CD8-positive, alpha-beta T cell (primary cell): ENCODE measurements at regions of chr11 and their contacts with region 1.

Region 1: DNA sequence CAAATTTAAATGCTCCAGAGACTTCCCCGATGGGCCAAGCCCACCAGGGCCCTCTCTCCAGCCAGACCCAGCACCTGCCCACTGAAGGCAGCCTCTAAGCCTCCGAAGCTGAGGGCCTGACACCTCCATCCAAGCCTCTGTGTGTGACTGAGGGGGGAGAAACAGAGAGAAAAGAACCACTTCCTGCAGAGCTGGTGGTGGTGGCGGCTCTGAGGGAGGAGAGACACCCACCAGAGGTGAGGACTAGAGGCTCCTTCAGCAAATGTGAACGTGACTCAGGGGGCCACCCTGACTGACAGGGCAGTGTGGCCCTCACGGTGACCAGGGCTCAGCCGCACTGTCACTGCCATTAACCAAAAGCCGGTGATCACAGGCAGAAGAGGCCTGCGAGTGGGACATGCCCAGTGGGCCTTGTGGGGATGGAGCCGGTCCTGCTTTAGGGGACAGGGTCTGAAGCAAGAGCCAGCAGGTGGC is 31.0 kb upstream of the CD5 start:
- DNase-seq: peak; percentile 37 to 87 (median 73)
- ATAC-seq: peak; percentile 98
- H3K4me3 ChIP-seq: no peak overlapping the region
- H3K4me3 Mint-ChIP-seq: peak overlapping the region; percentile 64
- H3K27ac ChIP-seq: peak overlapping the region; percentile 13 to 74
- H3K27ac Mint-ChIP-seq: peak overlapping the region; percentile 94
- H3K4me1 ChIP-seq: peaks cover 76% of the 10 kb centered on the region
- H3K4me1 Mint-ChIP-seq: peaks cover 81% of the 10 kb centered on the region
- H3K27me3 ChIP-seq: no peaks in the 10 kb centered on the region
- H3K27me3 Mint-ChIP-seq: no peaks in the 10 kb centered on the region
- CTCF ChIP-seq: no peak

Region 2: DNA sequence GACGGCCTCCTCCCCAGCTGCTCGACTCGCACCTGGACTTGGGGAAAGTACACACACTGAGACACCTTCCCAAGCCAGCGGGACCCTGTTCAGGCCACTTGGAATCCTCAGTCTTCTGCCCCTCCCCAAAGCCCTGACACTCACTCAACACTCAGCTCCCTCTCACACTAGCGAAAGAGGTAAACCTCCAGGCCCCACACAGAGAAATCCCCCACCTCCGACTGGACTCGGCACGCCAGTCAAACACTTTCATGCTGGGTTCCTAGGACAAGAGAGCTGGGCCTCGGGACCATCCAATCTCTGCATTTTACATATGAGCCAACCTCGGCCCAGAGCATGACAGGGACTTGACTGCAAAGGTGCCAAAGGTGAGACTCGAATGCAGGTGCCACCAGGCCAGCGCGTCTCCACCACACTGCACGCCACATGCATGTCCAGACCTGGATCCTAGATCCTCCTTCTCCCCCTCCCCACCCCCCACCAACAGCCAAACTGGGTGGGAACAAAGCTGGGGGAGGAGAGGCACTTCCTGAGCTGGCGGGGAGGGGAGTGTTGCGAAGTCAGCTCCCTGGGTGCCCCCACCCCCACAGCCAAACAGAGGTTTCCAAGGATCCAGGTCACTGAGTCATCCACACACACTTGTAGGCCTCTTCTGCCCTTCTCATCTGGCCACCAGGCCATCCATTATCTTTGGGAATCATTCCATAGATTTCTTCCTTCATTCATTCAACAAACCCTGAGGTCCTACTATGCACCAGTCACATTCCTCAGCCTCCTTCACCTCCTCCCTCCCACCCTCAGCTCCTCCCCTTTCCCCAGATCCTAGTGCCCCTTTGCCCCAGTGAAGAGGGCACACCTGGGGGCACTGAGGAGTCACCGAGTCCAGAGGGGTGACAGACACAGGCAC is 20.4 kb after region 1 on chr11:
- CTCF ChIA-PET with region 1: interaction called, 4 read pairs
- POLR2A ChIA-PET with region 1: interaction called, 3 read pairs
- intact Hi-C with region 1: loop called in 1 of 2 experiments (anchors 2 kb)
- DNase-seq: peak in 1 of 9 experiments; percentile 38
- ATAC-seq: peak; percentile 21
- H3K4me3 ChIP-seq: peak overlapping the region in 1 of 2 experiments; percentile 33
- H3K4me3 Mint-ChIP-seq: peak overlapping the region; percentile 55
- H3K27ac ChIP-seq: no peak overlapping the region
- H3K27ac Mint-ChIP-seq: peak overlapping the region; percentile 71
- H3K4me1 ChIP-seq: peaks cover 28% of the 10 kb centered on the region
- H3K4me1 Mint-ChIP-seq: peaks cover 37% of the 10 kb centered on the region
- H3K27me3 ChIP-seq: no peaks in the 10 kb centered on the region
- H3K27me3 Mint-ChIP-seq: no peaks in the 10 kb centered on the region
- CTCF ChIP-seq: no peak

Region 3: DNA sequence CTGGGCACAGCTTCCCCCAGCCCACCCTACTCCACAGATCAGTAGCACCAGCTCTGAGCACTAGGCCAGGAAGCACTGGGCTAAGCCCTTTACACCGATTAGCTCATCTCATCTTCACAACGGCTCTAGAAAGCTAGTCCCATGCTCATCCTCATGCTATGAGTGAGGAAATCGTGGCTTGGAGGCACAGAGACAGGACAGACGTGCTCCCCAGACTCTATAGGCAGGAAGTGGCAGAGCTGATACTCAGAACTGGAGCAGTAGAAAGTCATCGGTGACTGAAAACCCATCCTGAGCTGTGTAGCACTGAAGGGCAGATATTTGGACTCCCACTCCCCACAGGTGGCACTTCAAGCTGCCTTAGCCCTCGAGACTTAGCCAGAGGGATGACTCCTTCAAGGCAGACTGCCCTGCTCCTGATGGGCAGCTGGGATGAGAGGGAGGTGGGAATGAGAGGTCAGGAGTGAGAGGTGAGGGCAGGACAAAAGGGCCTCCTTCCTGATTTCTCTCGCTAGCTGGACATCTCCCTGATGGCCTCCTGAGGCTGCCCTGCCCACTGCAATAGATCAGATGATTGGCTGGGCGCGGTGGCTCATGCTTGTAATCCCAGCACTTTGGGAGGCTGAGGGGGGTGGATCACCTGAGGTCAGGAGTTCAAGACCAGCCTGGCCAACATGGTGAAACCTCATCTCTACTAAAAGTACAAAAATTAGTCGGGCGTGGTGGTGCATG is 40.7 kb after region 1 on chr11:
- CTCF ChIA-PET with region 1: interaction called, 5 read pairs
- POLR2A ChIA-PET with region 1: interaction called, 6 read pairs
- intact Hi-C with region 1: loop called in 1 of 2 experiments (anchors 5 kb)
- DNase-seq: peak in 6 of 9 experiments; percentile 48 to 83 (median 66)
- ATAC-seq: peak; percentile 79
- H3K4me3 ChIP-seq: no peak overlapping the region
- H3K4me3 Mint-ChIP-seq: peak overlapping the region; percentile 79
- H3K27ac ChIP-seq: peak overlapping the region; percentile 46 to 91
- H3K27ac Mint-ChIP-seq: peak overlapping the region; percentile 87
- H3K4me1 ChIP-seq: peaks cover 86% of the 10 kb centered on the region
- H3K4me1 Mint-ChIP-seq: peaks cover 91% of the 10 kb centered on the region
- H3K27me3 ChIP-seq: peaks cover 0 to 4% of the 10 kb centered on the region in 2 experiments
- H3K27me3 Mint-ChIP-seq: no peaks in the 10 kb centered on the region
- CTCF ChIP-seq: no peak

Region 4: GRCh38 chr11:61161190-61162091 is 90.2 kb after region 1 on chr11 and contains the start of gene VPS37C:
- CTCF ChIA-PET with region 1: no interaction called
- POLR2A ChIA-PET with region 1: no interaction called
- intact Hi-C with region 1: no loop called
- DNase-seq: peak; percentile 85 to 97 (median 91)
- ATAC-seq: peak; percentile 73
- H3K4me3 ChIP-seq: peak within 1 kb of the TSS; percentile 63 to 65
- H3K4me3 Mint-ChIP-seq: peak within 1 kb of the TSS; percentile 87
- H3K27ac ChIP-seq: peak within 1 kb of the TSS; percentile 58 to 88
- H3K27ac Mint-ChIP-seq: peak within 1 kb of the TSS; percentile 94
- H3K4me1 ChIP-seq: peaks cover 16% of the 10 kb centered on the region
- H3K4me1 Mint-ChIP-seq: peaks cover 53% of the 10 kb centered on the region
- H3K27me3 ChIP-seq: no peaks in the 10 kb centered on the region
- H3K27me3 Mint-ChIP-seq: peaks cover 2% of the 10 kb centered on the region
- CTCF ChIP-seq: no peak
- total RNA-seq, gene VPS37C: 2.1 to 2.2 TPM

Region 5: DNA sequence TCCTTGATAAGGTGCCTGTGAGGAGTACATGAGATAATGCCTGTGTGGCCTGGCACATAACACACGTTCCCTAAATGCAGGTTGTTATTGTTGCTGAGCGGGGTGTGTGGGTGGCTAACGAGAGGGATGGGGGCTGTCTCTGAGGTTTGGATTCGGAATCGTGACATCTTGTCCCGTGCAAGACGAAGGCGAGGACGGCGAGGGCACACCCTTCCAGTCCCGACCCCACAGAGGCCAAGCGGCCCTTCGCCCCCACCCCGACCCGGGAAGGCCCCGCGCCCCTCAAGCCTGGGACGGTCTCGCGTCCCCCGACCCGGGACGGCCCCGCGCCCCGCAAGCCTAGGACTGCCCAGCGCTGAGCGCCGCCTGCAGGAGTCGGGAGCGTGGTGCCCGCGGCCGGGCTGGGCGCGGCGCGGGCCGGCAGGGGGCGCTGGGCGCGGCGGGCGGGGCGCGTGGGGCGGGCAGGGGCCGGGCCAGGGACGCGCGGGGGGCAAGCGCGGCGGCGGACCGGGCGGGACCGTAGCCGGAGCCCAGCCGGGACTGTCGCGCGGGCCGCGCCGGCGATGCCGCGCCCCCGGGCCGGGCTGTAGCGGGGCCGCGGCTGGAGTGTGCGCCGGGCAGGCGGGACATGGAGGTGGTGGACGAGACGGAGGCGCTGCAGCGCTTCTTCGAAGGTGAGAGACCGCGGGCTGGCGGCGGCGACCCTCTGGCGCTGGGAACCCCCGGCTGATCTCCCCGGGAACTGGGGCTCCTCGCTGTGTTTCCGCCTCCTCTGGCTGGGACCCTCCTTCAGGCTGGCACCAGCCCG is 681.1 kb after region 1 on chr11 and contains the start of gene MYRF:
- CTCF ChIA-PET with region 1: no interaction called
- POLR2A ChIA-PET with region 1: no interaction called
- intact Hi-C with region 1: no loop called
- DNase-seq: peak; percentile 29 to 78 (median 54)
- ATAC-seq: peak; percentile 92
- H3K4me3 ChIP-seq: peak within 1 kb of the TSS; percentile 33 to 42
- H3K4me3 Mint-ChIP-seq: peak within 1 kb of the TSS; percentile 81
- H3K27ac ChIP-seq: no peak within 1 kb of the TSS
- H3K27ac Mint-ChIP-seq: no peak within 1 kb of the TSS
- H3K4me1 ChIP-seq: peaks cover 16% of the 10 kb centered on the region
- H3K4me1 Mint-ChIP-seq: peaks cover 15% of the 10 kb centered on the region
- H3K27me3 ChIP-seq: peaks cover 3 to 10% of the 10 kb centered on the region in 2 experiments
- H3K27me3 Mint-ChIP-seq: peaks cover 33% of the 10 kb centered on the region
- CTCF ChIP-seq: peak; percentile 22
- total RNA-seq, gene MYRF: 0.62 to 0.67 TPM